ENCODE measurements at regions of chr12 and their contacts with region 1.

Region 1: DNA sequence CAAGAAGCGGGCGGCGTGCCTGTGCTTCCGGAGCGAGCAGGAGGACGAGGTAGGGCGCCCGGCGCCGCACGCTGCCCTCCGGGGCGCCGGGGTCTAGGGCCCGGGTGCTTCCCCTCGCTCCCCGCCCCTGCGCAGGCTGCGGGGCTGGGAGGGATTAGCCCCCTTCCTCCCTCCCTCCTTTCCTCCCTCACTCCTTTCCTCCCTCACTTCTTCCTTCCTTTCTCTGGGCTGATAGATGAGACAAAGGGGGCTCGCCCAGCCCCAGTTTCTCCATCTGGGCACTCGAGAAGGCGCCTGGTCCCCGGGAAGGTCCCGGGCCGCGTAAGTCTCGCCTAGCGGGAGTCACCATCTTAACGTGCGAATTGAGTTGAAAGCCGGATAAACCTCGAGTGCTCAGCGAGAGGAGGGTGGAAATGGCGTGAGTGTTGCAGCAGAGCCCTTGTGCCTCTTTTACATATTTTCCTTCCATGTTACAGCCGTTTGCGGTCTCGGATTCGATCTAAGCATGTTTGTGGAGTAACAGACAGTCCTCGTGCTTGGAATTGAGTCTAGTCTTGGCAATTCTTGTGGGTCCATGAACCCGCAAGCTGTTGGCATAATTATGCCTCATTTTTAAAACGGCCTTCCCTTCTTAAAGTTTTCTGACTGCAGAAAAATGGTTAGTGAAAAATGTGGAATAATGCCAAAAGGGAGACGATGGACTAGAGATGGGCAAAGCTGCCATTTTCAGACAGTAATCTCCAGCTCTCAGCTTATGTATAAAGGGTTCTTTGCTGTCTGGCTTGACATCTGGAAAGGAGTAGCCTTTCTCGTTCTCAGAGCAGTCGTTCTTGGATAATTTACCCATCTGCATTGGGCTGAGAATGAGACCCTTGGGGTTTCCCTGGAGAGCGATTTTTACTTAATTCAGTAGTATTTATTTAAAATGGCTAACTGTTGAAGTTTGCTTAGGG is 924 bp downstream of the NUDT4 start:
- DNase-seq: peak; percentile 18 to 85 (median 57)
- ATAC-seq: peak; percentile 54
- H3K4me3 ChIP-seq: peak overlapping the region; percentile 72 to 87
- H3K4me3 Mint-ChIP-seq: peak overlapping the region; percentile 99
- H3K27ac ChIP-seq: peak overlapping the region; percentile 77 to 81
- H3K27ac Mint-ChIP-seq: peak overlapping the region; percentile 99
- H3K4me1 ChIP-seq: peaks cover 23% of the 10 kb centered on the region
- H3K4me1 Mint-ChIP-seq: peaks cover 44% of the 10 kb centered on the region
- H3K27me3 ChIP-seq: no peaks in the 10 kb centered on the region
- H3K27me3 Mint-ChIP-seq: no peaks in the 10 kb centered on the region
- CTCF ChIP-seq: no peak

Region 2: GRCh38 chr12:93098077-93098476 is 280.6 kb before region 1 on chr12:
- CTCF ChIA-PET with region 1: interaction called, 12 read pairs
- POLR2A ChIA-PET with region 1: no interaction called
- intact Hi-C with region 1: loop called (anchors 5 kb)
- DNase-seq: peak; percentile 41 to 79 (median 69)
- ATAC-seq: peak; percentile 83
- H3K4me3 ChIP-seq: no peak overlapping the region
- H3K4me3 Mint-ChIP-seq: no peak overlapping the region
- H3K27ac ChIP-seq: no peak overlapping the region
- H3K27ac Mint-ChIP-seq: no peak overlapping the region
- H3K4me1 ChIP-seq: no peaks in the 10 kb centered on the region
- H3K4me1 Mint-ChIP-seq: peaks cover 9% of the 10 kb centered on the region
- H3K27me3 ChIP-seq: no peaks in the 10 kb centered on the region
- H3K27me3 Mint-ChIP-seq: no peaks in the 10 kb centered on the region
- CTCF ChIP-seq: peak; percentile 65

Region 3: GRCh38 chr12:93363841-93364297 is 14.8 kb before region 1 on chr12:
- CTCF ChIA-PET with region 1: no interaction called
- POLR2A ChIA-PET with region 1: interaction called, 11 read pairs
- intact Hi-C with region 1: no loop called
- DNase-seq: peak in 2 of 9 experiments; percentile 17 to 46
- ATAC-seq: peak; percentile 73
- H3K4me3 ChIP-seq: no peak overlapping the region
- H3K4me3 Mint-ChIP-seq: peak overlapping the region; percentile 13
- H3K27ac ChIP-seq: no peak overlapping the region
- H3K27ac Mint-ChIP-seq: peak overlapping the region; percentile 4
- H3K4me1 ChIP-seq: peaks cover 15% of the 10 kb centered on the region
- H3K4me1 Mint-ChIP-seq: peaks cover 18% of the 10 kb centered on the region
- H3K27me3 ChIP-seq: no peaks in the 10 kb centered on the region
- H3K27me3 Mint-ChIP-seq: no peaks in the 10 kb centered on the region
- CTCF ChIP-seq: no peak

Region 4: GRCh38 chr12:93419388-93420034 is 40.9 kb after region 1 on chr12:
- CTCF ChIA-PET with region 1: interaction called, 11 read pairs
- POLR2A ChIA-PET with region 1: no interaction called
- intact Hi-C with region 1: loop called in 1 of 2 experiments (anchors 2 kb)
- DNase-seq: peak in 2 of 9 experiments; percentile 60 to 73
- ATAC-seq: peak; percentile 78
- H3K4me3 ChIP-seq: no peak overlapping the region
- H3K4me3 Mint-ChIP-seq: no peak overlapping the region
- H3K27ac ChIP-seq: peak overlapping the region in 1 of 2 experiments; percentile 19
- H3K27ac Mint-ChIP-seq: peak overlapping the region; percentile 38
- H3K4me1 ChIP-seq: peaks cover 40% of the 10 kb centered on the region
- H3K4me1 Mint-ChIP-seq: peaks cover 87% of the 10 kb centered on the region
- H3K27me3 ChIP-seq: no peaks in the 10 kb centered on the region
- H3K27me3 Mint-ChIP-seq: no peaks in the 10 kb centered on the region
- CTCF ChIP-seq: peak; percentile 69

Region 5: GRCh38 chr12:93467351-93468007 is 88.8 kb after region 1 on chr12 and contains the start of gene MRPL42:
- CTCF ChIA-PET with region 1: no interaction called
- POLR2A ChIA-PET with region 1: no interaction called
- intact Hi-C with region 1: loop called in 1 of 2 experiments (anchors 1 kb)
- DNase-seq: peak; percentile 88 to 96 (median 91)
- ATAC-seq: peak; percentile 94
- H3K4me3 ChIP-seq: peak within 1 kb of the TSS; percentile 64 to 95
- H3K4me3 Mint-ChIP-seq: peak within 1 kb of the TSS; percentile 93
- H3K27ac ChIP-seq: peak within 1 kb of the TSS; percentile 81 to 88
- H3K27ac Mint-ChIP-seq: peak within 1 kb of the TSS; percentile 95
- H3K4me1 ChIP-seq: peaks cover 15% of the 10 kb centered on the region
- H3K4me1 Mint-ChIP-seq: peaks cover 34% of the 10 kb centered on the region
- H3K27me3 ChIP-seq: no peaks in the 10 kb centered on the region
- H3K27me3 Mint-ChIP-seq: no peaks in the 10 kb centered on the region
- CTCF ChIP-seq: peak; percentile 71
- total RNA-seq, gene MRPL42: 31.6 to 33.2 TPM

Measured in CD8-positive, alpha-beta T cell (primary cell).